ENCODE measurements at regions of chr16 and their contacts with region 1.

Region 1: GRCh38 chr16:3880623-3881498 is at the start of gene CREBBP:
- DNase-seq: peak; percentile 84
- H3K4me3 ChIP-seq: peak within 1 kb of the TSS; percentile 83 to 97 (median 90)
- H3K27ac ChIP-seq: peak within 1 kb of the TSS; percentile 80
- H3K4me1 ChIP-seq: peaks cover 12% of the 10 kb centered on the region
- H3K27me3 ChIP-seq: no peaks in the 10 kb centered on the region
- CTCF ChIP-seq: no peak
- total RNA-seq, gene CREBBP: 20.2 to 45.0 TPM

Region 2: GRCh38 chr16:3645504-3646347 is 235.1 kb before region 1 on chr16:
- CTCF ChIA-PET with region 1: no interaction called
- dilution Hi-C with region 1: loop called (anchors 10 kb)
- in situ Hi-C with region 1: no loop called
- intact Hi-C with region 1: no loop called
- DNase-seq: no peak
- H3K4me3 ChIP-seq: no peak overlapping the region
- H3K27ac ChIP-seq: no peak overlapping the region
- H3K4me1 ChIP-seq: peaks cover 12% of the 10 kb centered on the region
- H3K27me3 ChIP-seq: no peaks in the 10 kb centered on the region
- CTCF ChIP-seq: no peak

Region 3: DNA sequence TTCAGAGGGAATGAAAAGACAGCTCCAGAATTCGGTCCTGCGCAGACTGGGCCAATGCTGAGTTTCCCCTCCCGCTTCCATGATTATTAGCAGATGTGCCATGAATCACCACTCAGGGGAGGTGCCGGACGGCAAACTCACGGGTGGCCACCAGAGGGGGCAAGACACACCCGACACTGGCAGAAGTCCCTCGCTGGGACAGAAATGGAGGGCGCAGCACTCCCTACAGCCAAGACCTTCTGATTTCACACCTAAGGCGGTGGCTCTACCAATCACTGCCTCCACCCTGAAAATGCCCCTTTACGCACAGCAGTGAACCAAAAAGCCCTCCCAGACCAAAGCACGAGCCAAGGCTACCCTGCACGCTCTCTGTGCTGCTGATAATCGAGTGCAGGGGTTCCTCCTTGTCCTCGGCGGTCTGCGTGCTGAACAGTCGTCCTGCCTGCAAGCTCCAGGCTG is 190.4 kb before region 1 on chr16:
- CTCF ChIA-PET with region 1: no interaction called
- dilution Hi-C with region 1: no loop called
- in situ Hi-C with region 1: loop called in 1 of 2 experiments (anchors 10 kb)
- intact Hi-C with region 1: loop called (anchors 1 kb)
- DNase-seq: peak; percentile 77
- H3K4me3 ChIP-seq: peak overlapping the region in 2 of 3 experiments; percentile 11 to 21
- H3K27ac ChIP-seq: no peak overlapping the region
- H3K4me1 ChIP-seq: peaks cover 5% of the 10 kb centered on the region
- H3K27me3 ChIP-seq: no peaks in the 10 kb centered on the region
- CTCF ChIP-seq: peak; percentile 83 to 93

Region 4: DNA sequence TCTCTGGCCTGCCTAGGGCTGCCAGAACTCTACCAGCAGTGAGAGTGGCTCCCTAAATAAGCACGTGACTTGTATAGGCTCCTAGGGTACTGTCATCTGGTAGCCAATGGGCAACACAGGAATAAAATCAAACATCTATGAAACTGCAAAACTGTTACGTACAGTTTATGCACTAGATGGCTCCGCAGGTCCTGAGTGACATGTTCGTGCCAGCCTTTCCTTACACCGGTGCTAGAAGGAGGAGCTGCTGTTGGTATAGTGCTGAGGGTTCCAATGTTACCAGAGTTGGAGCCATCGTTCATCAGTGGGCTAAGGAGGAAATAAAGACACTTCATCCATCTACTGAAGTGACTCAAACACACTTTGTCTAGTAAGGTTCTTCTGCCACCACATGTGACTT is 100.3 kb before region 1 on chr16:
- CTCF ChIA-PET with region 1: no interaction called
- dilution Hi-C with region 1: no loop called
- in situ Hi-C with region 1: no loop called
- intact Hi-C with region 1: loop called (anchors 5 kb)
- DNase-seq: peak; percentile 22
- H3K4me3 ChIP-seq: no peak overlapping the region
- H3K27ac ChIP-seq: no peak overlapping the region
- H3K4me1 ChIP-seq: no peaks in the 10 kb centered on the region
- H3K27me3 ChIP-seq: no peaks in the 10 kb centered on the region
- CTCF ChIP-seq: peak in 1 of 2 donors; percentile 9

Region 5: GRCh38 chr16:3857189-3858043 is 23.4 kb before region 1 on chr16:
- CTCF ChIA-PET with region 1: no interaction called
- dilution Hi-C with region 1: no loop called
- in situ Hi-C with region 1: no loop called
- intact Hi-C with region 1: loop called (anchors 2 kb)
- DNase-seq: peak; percentile 71
- H3K4me3 ChIP-seq: no peak overlapping the region
- H3K27ac ChIP-seq: no peak overlapping the region
- H3K4me1 ChIP-seq: peaks cover 18% of the 10 kb centered on the region
- H3K27me3 ChIP-seq: no peaks in the 10 kb centered on the region
- CTCF ChIP-seq: no peak